Thyroid gland (tissue), 4 donors: ENCODE measurements at regions of chr6 and their contacts with region 1.

Region 1: DNA sequence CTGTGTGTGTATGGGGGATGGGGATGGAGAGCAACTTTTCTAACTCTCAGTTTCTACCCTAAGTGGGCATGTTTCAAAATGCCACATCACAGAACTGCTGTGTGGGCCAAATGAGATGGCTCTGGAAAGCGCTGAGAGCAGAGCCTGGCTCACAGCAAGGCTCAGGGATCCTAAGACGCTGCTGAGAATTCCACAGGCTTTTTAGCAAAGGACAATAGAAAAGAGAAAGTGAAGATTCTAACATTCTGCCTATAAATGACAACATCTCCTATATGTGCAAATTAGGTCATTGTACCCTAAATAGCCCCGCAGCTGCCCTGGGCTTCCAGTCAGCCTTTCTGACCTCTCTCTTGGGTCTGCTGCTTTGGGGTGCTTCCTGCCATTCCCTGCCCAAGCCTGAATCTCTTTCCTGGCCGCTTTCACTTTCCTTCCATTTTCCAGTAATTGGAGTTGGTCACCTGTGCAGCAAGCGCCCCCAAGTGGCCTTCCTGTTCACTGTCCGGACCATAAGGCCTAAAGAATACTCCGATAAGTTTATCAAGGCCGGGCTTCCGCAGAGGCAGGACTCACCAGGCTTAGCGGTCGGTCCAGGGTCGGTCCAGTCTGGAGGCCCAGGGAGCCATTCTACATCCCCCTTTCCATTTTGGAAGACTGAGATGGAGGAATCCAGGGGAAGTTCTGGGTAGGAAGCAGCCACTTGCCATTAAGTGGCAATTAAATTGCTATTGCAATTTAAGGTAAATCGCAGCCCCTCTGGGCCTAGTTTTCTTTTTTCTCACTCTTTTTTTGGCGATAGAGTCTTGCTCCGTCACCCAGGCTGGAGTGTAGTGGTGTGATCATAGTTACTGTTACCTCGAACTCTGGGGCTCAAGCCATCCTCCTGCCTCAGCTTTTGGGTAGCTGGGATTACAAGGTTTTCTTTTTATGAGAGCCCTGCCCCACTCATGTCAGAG is 6.6 kb upstream of the DDR1 start:
- DNase-seq: peak; percentile 92 to 95
- H3K4me3 ChIP-seq: peak overlapping the region in 1 of 3 donors; percentile 1
- H3K27ac ChIP-seq: peak overlapping the region; percentile 58 to 80 (median 77)
- H3K4me1 ChIP-seq: peaks cover 20 to 47% of the 10 kb centered on the region in 2 donors
- H3K27me3 ChIP-seq: no peaks in the 10 kb centered on the region
- CTCF ChIP-seq: peak; percentile 64 to 98 (median 93)
- POLR2A ChIP-seq: no peak

Region 2: DNA sequence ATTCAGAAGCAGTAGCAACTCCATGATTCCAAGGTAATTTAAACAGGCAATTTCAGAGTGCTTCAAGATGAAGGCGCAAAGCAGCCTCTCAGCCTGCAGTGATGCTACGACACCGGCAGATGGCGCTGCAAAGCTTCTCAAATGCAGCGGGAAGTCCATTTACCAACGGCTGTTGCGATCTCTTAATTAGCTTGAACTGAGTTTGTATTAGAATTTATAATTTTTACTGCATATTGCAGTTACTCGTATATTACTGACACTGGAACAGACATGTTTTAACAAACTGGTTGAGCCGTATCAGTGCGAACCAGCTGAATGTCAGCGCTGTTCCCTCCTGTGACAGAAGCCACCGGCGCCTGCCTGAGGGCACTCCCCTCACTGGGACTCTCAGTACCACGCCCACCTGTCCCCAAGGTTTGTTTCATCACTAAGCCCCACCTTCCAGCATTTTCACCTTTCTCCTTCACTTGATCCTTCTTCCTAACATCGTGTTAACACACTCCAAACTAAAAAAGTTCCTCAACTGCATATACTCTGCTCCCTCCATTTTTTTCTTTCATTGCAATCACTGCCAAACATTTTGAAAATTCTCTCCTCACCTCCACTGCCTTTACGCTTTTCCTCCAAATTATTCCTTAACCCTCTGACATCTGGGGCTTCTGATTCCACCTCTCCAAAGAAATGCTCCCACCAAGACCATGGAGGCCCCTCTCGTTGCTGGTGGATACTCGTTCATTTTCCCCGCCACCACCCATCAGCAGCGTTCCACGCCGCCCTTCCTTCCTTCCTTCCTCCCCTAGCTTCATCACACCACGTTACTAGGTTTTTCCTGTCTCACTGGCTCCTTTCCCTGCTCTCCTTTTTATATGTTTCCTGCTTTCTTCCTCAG is 335.9 kb before region 1 on chr6:
- intact Hi-C with region 1: no loop called
- DNase-seq: peak; percentile 71 to 75
- H3K4me3 ChIP-seq: no peak overlapping the region
- H3K27ac ChIP-seq: peak overlapping the region in 2 of 3 donors; percentile 35 to 38
- H3K4me1 ChIP-seq: peaks cover 5 to 8% of the 10 kb centered on the region in 2 donors
- H3K27me3 ChIP-seq: no peaks in the 10 kb centered on the region
- CTCF ChIP-seq: peak; percentile 86 to 96 (median 94)
- POLR2A ChIP-seq: no peak

Region 3: GRCh38 chr6:30793521-30794194 is 84.0 kb before region 1 on chr6:
- intact Hi-C with region 1: no loop called
- DNase-seq: no peak
- H3K4me3 ChIP-seq: no peak overlapping the region
- H3K27ac ChIP-seq: peak overlapping the region in 2 of 3 donors; percentile 22 to 50
- H3K4me1 ChIP-seq: peaks cover 0 to 23% of the 10 kb centered on the region in 2 donors
- H3K27me3 ChIP-seq: no peaks in the 10 kb centered on the region
- CTCF ChIP-seq: no peak
- POLR2A ChIP-seq: no peak

Region 4: DNA sequence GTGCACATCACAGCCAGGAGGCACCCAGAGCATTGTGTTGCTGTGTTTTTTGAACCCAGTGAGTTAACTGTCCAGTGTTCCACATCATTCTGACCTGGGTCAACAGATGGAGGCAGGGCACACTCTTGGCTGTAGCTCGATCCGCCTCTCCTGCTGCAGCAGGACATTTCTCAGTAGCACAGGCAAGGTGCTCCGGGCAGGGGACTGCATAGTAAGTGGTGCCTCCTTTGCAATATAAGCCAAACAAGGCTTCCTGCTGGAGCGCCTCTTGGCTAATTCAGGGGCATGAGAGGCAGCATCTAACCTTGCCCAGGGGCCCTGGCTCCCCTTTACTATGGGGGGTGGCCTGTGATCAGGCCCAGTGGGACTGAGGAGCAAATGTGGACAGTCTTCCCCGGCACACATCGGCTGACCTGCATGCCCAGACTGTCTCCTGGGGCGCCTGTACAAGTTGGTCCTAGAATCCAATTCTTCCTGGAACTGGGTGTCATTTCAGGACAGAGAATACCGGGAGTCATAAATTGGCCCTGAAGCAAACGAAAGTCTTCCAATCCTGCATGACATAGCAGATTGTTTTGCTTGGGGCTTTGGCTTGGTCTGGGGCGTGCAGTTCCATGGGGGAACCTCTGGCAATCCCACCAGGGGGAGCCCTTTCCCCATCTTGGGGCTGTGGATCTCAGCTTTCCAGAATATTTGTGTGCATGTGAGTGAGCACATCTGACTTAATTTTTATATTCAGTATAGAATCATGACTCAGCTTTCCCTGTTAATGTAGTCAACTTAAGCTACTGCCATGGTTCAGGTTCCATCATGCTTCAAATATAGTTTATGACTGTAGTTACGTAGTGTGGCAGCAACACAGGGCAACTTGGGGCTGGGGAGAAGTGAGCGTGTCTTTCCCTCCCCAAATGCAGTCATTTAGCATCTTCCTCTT is 49.4 kb before region 1 on chr6:
- intact Hi-C with region 1: loop called (anchors 2 kb)
- DNase-seq: peak; percentile 90 to 95
- H3K4me3 ChIP-seq: no peak overlapping the region
- H3K27ac ChIP-seq: peak overlapping the region; percentile 85 to 92 (median 90)
- H3K4me1 ChIP-seq: peaks cover 40 to 42% of the 10 kb centered on the region in 2 donors
- H3K27me3 ChIP-seq: no peaks in the 10 kb centered on the region
- CTCF ChIP-seq: peak; percentile 76 to 98 (median 94)
- POLR2A ChIP-seq: no peak